Right ventricle myocardium superior (tissue), 1 donor: ENCODE measurements at regions of chr11 and their contacts with region 1.

Region 1: GRCh38 chr11:83292709-83293456 is 6.7 kb upstream of the CCDC90B start:
- DNase-seq: no peak
- ATAC-seq: peak; percentile 64

Region 2: GRCh38 chr11:83235825-83236224 is 57.1 kb before region 1 on chr11:
- intact Hi-C with region 1: no loop called
- DNase-seq: no peak
- ATAC-seq: no peak

Region 3: GRCh38 chr11:83456075-83456474 is 163.2 kb after region 1 on chr11:
- intact Hi-C with region 1: no loop called
- DNase-seq: no peak
- ATAC-seq: no peak

Region 4: DNA sequence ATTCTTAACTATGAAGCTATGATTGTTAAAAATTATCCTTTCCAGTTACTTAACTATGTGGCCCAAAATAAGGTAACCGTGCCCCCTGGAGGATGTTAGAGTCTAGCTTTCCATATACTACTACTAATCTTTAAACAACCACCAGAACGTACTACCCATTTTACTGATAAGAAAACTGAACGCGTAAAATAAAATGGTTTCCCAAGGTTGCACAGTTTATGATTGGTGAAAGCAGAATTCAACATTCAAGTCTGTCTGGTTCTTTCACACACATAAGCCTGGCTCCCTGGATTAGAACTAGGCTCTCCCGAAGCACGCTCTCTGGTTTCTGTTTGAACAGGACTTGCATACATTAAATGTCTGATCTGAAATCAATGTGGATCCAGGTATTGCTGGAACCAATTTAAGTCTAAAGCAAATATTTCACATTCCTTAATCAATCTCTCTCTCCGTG is 431.2 kb after region 1 on chr11:
- intact Hi-C with region 1: loop called (anchors 5 kb)
- DNase-seq: no peak
- ATAC-seq: peak; percentile 87

Region 5: DNA sequence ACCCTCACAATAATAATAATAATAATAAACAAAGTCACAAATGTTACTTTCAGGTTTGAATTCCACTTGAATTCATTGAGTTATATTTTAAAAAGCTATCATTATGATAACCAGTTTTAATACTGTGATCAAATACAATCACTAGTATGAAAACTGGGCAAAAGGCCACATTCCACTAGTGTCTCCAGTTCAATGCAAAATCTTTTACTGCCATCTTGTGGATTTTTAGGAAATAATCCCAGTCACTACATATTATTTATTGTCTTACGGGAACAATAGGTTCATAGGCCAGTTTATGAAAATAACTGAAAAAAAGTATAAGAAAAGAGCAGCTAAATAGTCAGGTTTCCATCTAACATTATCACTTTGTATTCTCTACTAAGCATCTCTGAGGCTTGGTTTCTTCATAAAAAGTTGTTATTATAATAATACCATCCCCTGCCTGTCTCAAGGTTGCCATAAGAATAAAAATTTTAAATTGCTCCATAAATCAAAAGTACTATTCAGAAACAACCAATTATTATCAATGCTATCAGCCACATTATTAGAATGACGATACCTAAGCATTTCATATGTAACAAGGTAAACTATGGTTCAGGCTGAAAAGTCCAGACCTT is 527.2 kb after region 1 on chr11:
- intact Hi-C with region 1: loop called (anchors 5 kb)
- DNase-seq: no peak
- ATAC-seq: peak; percentile 58